Activated CD8-positive, alpha-beta T cell treated with anti-CD3 and anti-CD28 coated beads, Interleukin-2, amount 10 ng/mL, durations not matched to agents 7 days and 5 days (primary cell): ENCODE measurements at regions of chr5 and their contacts with region 1.

Region 1: GRCh38 chr5:141618804-141619554 is at the start of gene DIAPH1:
- DNase-seq: peak; percentile 98
- ATAC-seq: peak; percentile 90
- H3K4me3 Mint-ChIP-seq: peak within 1 kb of the TSS; percentile 98
- H3K27ac Mint-ChIP-seq: peak within 1 kb of the TSS; percentile 98
- H3K4me1 Mint-ChIP-seq: peaks cover 59% of the 10 kb centered on the region
- H3K27me3 Mint-ChIP-seq: no peaks in the 10 kb centered on the region
- total RNA-seq, gene DIAPH1: 281 to 286 TPM

Region 2: GRCh38 chr5:140977003-140977402 is 642.0 kb before region 1 on chr5:
- CTCF ChIA-PET with region 1: no interaction called
- POLR2A ChIA-PET with region 1: no interaction called
- DNase-seq: no peak
- ATAC-seq: no peak
- H3K4me3 Mint-ChIP-seq: no peak overlapping the region
- H3K27ac Mint-ChIP-seq: no peak overlapping the region
- H3K4me1 Mint-ChIP-seq: no peaks in the 10 kb centered on the region
- H3K27me3 Mint-ChIP-seq: no peaks in the 10 kb centered on the region

Region 3: GRCh38 chr5:141590127-141590526 is 28.9 kb before region 1 on chr5:
- CTCF ChIA-PET with region 1: interaction called, 480 read pairs
- POLR2A ChIA-PET with region 1: interaction called, 41 read pairs
- DNase-seq: no peak
- ATAC-seq: no peak
- H3K4me3 Mint-ChIP-seq: no peak overlapping the region
- H3K27ac Mint-ChIP-seq: no peak overlapping the region
- H3K4me1 Mint-ChIP-seq: peaks cover 27% of the 10 kb centered on the region
- H3K27me3 Mint-ChIP-seq: no peaks in the 10 kb centered on the region

Region 4: GRCh38 chr5:141598391-141599350 is 20.3 kb before region 1 on chr5:
- CTCF ChIA-PET with region 1: interaction called, 480 read pairs
- POLR2A ChIA-PET with region 1: interaction called, 41 read pairs
- DNase-seq: no peak
- ATAC-seq: peak; percentile 57
- H3K4me3 Mint-ChIP-seq: no peak overlapping the region
- H3K27ac Mint-ChIP-seq: peak overlapping the region; percentile 65
- H3K4me1 Mint-ChIP-seq: peaks cover 72% of the 10 kb centered on the region
- H3K27me3 Mint-ChIP-seq: no peaks in the 10 kb centered on the region

Region 5: DNA sequence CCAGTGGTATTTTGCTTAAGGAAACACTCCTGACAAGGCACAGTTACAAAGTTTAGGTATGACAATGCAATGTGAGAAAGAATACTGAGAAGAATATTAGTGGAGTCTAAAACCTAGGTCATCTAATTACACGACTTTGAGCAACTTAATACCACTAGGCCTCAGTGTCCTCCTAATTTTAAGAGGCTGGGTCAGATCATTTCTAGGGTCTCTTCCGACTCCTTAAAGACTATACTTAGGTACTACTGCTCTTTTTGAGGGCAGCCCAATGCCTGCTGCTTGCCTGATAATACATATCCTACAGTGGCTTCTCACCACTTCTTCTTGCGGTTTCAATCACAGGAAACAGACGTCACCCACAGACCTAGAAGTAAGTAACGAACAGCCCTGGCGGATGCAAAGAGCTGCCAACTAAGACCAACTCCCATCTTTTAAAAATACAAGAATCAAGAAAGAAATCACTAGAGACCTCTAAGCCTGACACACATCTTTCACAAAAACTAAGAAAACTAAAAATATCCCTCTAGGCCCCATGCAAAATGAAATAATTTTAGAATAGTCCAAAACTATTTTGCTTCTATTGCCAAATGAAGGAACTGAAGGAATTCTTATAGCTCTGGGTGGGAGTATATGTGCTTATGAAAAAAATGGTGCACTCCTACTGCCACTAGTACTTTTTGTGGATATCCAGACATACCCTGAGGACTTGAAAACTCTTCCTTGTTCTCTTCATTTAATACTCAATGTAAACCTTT is 13.3 kb before region 1 on chr5:
- CTCF ChIA-PET with region 1: interaction called, 188 read pairs
- POLR2A ChIA-PET with region 1: interaction called, 30 read pairs
- DNase-seq: peak; percentile 90
- ATAC-seq: peak; percentile 91
- H3K4me3 Mint-ChIP-seq: peak overlapping the region; percentile 77
- H3K27ac Mint-ChIP-seq: peak overlapping the region; percentile 97
- H3K4me1 Mint-ChIP-seq: peaks cover 88% of the 10 kb centered on the region
- H3K27me3 Mint-ChIP-seq: no peaks in the 10 kb centered on the region

Region 6: GRCh38 chr5:141650851-141651727 is 32.1 kb after region 1 on chr5 and contains the start of gene FCHSD1:
- CTCF ChIA-PET with region 1: interaction called, 13 read pairs
- POLR2A ChIA-PET with region 1: interaction called, 4 read pairs
- DNase-seq: peak; percentile 91
- ATAC-seq: peak; percentile 95
- H3K4me3 Mint-ChIP-seq: peak within 1 kb of the TSS; percentile 95
- H3K27ac Mint-ChIP-seq: peak within 1 kb of the TSS; percentile 95
- H3K4me1 Mint-ChIP-seq: peaks cover 45% of the 10 kb centered on the region
- H3K27me3 Mint-ChIP-seq: no peaks in the 10 kb centered on the region
- total RNA-seq, gene FCHSD1: 46.9 to 47.8 TPM

Region 7: GRCh38 chr5:141747152-141748141 is 128.5 kb after region 1 on chr5:
- CTCF ChIA-PET with region 1: no interaction called
- POLR2A ChIA-PET with region 1: no interaction called
- DNase-seq: no peak
- ATAC-seq: no peak
- H3K4me3 Mint-ChIP-seq: no peak overlapping the region
- H3K27ac Mint-ChIP-seq: no peak overlapping the region
- H3K4me1 Mint-ChIP-seq: no peaks in the 10 kb centered on the region
- H3K27me3 Mint-ChIP-seq: peaks cover 25% of the 10 kb centered on the region